CD8-positive, alpha-beta memory T cell (primary cell): ENCODE measurements at regions of chr10 and their contacts with region 1.

Region 1: DNA sequence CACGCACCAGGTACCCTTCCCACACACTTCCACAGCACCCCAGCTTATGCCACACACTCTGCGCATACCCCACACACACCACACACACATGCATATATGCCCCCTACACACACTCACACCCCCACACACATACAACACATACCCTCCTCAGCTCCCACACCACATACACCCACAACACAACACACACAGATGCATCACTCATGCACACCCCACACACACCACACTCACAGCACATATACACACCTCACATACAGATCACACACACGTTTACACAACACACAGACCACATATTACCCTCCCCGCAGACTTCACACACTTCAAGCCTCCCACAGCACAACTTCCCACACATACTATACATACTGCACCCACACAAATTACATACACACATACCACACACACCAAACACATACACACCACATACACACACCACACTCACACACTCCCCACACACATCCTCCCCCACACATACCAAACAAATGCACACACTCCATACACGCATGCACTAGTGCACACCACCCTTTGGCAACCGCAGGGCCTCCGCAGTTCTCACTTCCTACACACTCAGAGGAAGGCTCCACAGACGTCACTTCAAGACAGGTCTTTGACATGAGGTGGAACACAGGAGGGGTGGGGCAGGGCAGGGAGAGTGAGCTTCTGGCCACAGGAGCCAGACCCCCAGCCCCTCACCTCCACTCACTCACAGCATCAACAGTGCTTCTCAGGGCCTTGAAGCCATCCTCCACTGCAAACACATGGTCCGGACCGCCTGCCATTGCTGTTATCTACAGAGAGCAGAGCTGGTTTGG is 18.5 kb upstream of the ANTXRL start:
- DNase-seq: peak in 4 of 5 donors; percentile 29 to 81 (median 52)
- H3K4me3 ChIP-seq: peak overlapping the region; percentile 72
- H3K4me3 Mint-ChIP-seq: no peak overlapping the region
- H3K27ac ChIP-seq: peak overlapping the region; percentile 57
- H3K27ac Mint-ChIP-seq: no peak overlapping the region
- H3K4me1 ChIP-seq: peaks cover 65% of the 10 kb centered on the region
- H3K4me1 Mint-ChIP-seq: peaks cover 46 to 66% (median 51%) of the 10 kb centered on the region in 3 donors
- H3K27me3 ChIP-seq: no peaks in the 10 kb centered on the region
- H3K27me3 Mint-ChIP-seq: no peaks in the 10 kb centered on the region

Region 2: GRCh38 chr10:46092524-46093081 is 175.7 kb before region 1 on chr10:
- CTCF ChIA-PET with region 1: no interaction called
- POLR2A ChIA-PET with region 1: no interaction called
- DNase-seq: peak in 4 of 5 donors; percentile 24 to 83 (median 56)
- H3K4me3 ChIP-seq: peak overlapping the region; percentile 72
- H3K4me3 Mint-ChIP-seq: no peak overlapping the region
- H3K27ac ChIP-seq: no peak overlapping the region
- H3K27ac Mint-ChIP-seq: no peak overlapping the region
- H3K4me1 ChIP-seq: peaks cover 78% of the 10 kb centered on the region
- H3K4me1 Mint-ChIP-seq: peaks cover 3 to 37% (median 6%) of the 10 kb centered on the region in 3 donors
- H3K27me3 ChIP-seq: no peaks in the 10 kb centered on the region
- H3K27me3 Mint-ChIP-seq: no peaks in the 10 kb centered on the region

Region 3: GRCh38 chr10:46234431-46235060 is 33.7 kb before region 1 on chr10:
- CTCF ChIA-PET with region 1: no interaction called
- POLR2A ChIA-PET with region 1: no interaction called
- DNase-seq: no peak
- H3K4me3 ChIP-seq: no peak overlapping the region
- H3K4me3 Mint-ChIP-seq: no peak overlapping the region
- H3K27ac ChIP-seq: no peak overlapping the region
- H3K27ac Mint-ChIP-seq: peak overlapping the region in 2 of 8 donors; percentile 15 to 22
- H3K4me1 ChIP-seq: no peaks in the 10 kb centered on the region
- H3K4me1 Mint-ChIP-seq: peaks cover 10 to 32% (median 15%) of the 10 kb centered on the region in 3 donors
- H3K27me3 ChIP-seq: no peaks in the 10 kb centered on the region
- H3K27me3 Mint-ChIP-seq: no peaks in the 10 kb centered on the region

Region 4: DNA sequence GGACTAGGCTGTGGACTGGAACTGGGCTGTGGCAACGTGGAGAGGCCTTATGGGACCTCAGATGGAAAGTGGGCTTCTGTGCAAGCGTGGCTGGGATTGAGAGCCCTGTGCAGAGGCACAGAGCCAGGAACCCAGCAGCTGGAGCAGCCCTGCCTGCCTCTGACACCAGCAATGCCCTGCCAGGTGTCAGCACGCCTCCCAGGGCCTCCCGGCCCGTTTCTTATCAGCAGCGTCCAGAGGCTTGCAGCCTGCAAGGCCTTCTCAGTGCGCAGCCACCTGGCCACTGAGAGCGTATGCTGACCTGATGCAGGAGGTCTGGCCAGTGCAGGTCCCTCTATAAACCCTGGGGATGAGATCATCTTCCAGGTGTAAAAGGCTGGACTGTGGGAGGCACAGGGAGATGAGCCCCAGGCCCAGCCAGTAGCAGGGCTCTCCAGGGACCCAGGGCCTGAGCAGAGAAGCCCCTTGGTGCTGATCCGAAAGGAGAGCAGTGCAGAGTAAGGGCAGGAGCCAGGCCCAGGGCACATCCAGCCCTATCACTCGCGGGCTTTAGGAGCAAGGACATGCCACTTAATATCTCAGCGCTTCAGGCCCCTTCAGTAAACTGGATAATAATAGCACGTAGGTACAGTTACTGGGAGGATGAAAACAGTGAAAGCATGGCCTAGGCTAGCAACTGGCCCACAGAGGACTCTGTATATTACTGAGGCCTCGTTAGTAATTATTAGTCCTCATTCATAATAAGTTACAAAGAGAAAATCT is 20.3 kb before region 1 on chr10:
- CTCF ChIA-PET with region 1: no interaction called
- POLR2A ChIA-PET with region 1: no interaction called
- DNase-seq: no peak
- H3K4me3 ChIP-seq: no peak overlapping the region
- H3K4me3 Mint-ChIP-seq: no peak overlapping the region
- H3K27ac ChIP-seq: no peak overlapping the region
- H3K27ac Mint-ChIP-seq: peak overlapping the region in 2 of 8 donors; percentile 63 to 88
- H3K4me1 ChIP-seq: no peaks in the 10 kb centered on the region
- H3K4me1 Mint-ChIP-seq: peaks cover 16 to 29% (median 23%) of the 10 kb centered on the region in 3 donors
- H3K27me3 ChIP-seq: no peaks in the 10 kb centered on the region
- H3K27me3 Mint-ChIP-seq: no peaks in the 10 kb centered on the region

Region 5: DNA sequence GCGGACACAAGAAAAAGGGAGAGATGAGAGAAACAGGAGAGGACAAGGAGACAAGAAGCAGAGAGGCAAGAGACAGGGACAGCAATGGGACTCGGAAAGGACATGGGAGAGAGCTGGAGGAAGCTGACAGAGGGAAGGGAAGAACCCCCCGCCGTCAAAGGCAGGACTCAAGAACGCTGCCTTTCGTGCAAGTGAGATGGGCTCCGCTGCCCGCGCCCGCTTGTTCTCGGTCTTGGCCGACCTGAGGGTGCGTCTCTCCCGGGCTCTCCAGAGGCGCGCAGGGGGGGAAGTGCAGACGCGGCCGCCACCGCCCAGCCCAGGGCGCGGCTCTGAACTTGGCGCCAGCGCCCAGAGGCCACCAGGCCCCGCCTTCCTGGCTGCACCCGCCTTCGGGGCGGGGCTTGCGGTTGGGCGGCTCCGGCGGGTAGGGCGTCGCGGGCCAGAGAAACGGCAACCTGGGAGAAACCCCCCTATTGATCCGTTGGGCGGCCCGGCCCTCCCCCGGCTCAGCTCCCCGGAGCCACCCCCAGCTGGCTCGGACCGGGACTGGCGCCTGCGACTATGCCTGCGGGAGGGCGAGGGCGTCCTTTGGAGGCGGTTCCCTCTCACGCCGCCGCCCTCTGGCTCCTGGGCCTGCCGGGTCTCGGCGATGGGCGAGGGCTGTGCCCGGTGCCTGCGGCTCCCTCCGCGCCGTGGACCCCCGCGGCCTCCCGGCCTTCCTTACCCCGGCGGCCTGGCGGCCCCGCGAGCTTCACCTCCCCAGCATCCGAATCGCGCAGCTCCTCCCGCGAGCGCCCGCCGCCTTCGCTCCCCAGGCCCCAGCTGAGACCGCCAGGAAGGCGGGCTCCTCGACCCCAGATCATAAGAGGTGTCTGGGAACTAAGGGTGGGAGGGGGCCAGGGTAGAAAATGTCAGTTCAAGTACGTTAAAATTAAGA is 16.3 kb after region 1 on chr10:
- CTCF ChIA-PET with region 1: interaction called, 5 read pairs
- POLR2A ChIA-PET with region 1: interaction called, 12 read pairs
- DNase-seq: peak; percentile 65 to 81 (median 71)
- H3K4me3 ChIP-seq: peak overlapping the region; percentile 61
- H3K4me3 Mint-ChIP-seq: peak overlapping the region; percentile 81 to 92 (median 90)
- H3K27ac ChIP-seq: peak overlapping the region; percentile 47
- H3K27ac Mint-ChIP-seq: peak overlapping the region in 7 of 8 donors; percentile 43 to 93 (median 81)
- H3K4me1 ChIP-seq: peaks cover 16% of the 10 kb centered on the region
- H3K4me1 Mint-ChIP-seq: peaks cover 11 to 25% (median 24%) of the 10 kb centered on the region in 3 donors
- H3K27me3 ChIP-seq: peaks cover 4% of the 10 kb centered on the region
- H3K27me3 Mint-ChIP-seq: peaks cover 0 to 2% of the 10 kb centered on the region in 2 donors